Dorsolateral prefrontal cortex (tissue), 120 donors: ENCODE measurements at regions of chr2 and their contacts with region 1.

Region 1: GRCh38 chr2:158006961-158007719 is 94.5 kb upstream of the UPP2 start:
- DNase-seq: no peak
- H3K4me3 ChIP-seq: no peak overlapping the region
- H3K27ac ChIP-seq: no peak overlapping the region
- H3K27me3 ChIP-seq: no peaks in the 10 kb centered on the region
- CTCF ChIP-seq: no peak

Region 2: GRCh38 chr2:157302492-157303099 is 704.5 kb before region 1 on chr2:
- intact Hi-C with region 1: loop called in 1 of 2 experiments (anchors 5 kb)
- DNase-seq: peak in 1 of 10 donors; percentile 38
- H3K4me3 ChIP-seq: peak overlapping the region in 14 of 59 donors; percentile 8 to 52 (median 21)
- H3K27ac ChIP-seq: peak overlapping the region in 10 of 59 donors; percentile 14 to 80 (median 37)
- H3K27me3 ChIP-seq: peaks cover 0 to 8% (median 0%) of the 10 kb centered on the region in 45 donors
- CTCF ChIP-seq: peak; percentile 77 to 99 (median 90)

Region 3: DNA sequence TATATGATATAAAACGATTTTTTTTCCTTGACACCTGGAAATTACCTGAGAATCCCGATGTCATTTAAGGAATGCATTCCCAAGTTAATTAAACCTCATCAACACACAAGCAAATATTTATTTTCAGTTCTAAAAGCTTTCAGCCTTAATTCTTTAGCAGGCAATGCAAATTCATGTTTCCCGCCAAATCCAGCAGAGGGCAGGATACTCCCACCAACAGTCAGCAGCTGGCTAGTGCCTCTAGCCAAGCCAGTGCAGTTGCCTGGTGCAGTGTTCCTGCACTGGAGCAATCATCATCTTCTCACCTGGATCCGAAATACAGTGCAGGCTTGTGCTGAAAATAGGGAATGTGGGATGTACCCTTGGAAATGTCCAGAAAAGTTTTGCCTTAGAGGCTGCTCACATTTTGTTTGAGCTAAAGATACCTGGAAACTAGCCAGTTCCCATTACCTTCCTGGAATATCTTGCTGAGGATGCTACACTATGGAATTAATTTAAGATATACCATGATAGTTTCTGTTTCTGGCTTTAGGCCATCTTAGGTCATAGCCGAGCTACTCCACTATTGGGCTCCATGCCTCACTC is 514.9 kb before region 1 on chr2:
- intact Hi-C with region 1: loop called (anchors 5 to 10 kb)
- DNase-seq: peak; percentile 31 to 81 (median 68)
- H3K4me3 ChIP-seq: no peak overlapping the region
- H3K27ac ChIP-seq: no peak overlapping the region
- H3K27me3 ChIP-seq: no peaks in the 10 kb centered on the region
- CTCF ChIP-seq: peak; percentile 49 to 92 (median 80)

Region 4: GRCh38 chr2:157497638-157498314 is 509.4 kb before region 1 on chr2:
- intact Hi-C with region 1: loop called (anchors 5 to 10 kb)
- DNase-seq: no peak
- H3K4me3 ChIP-seq: no peak overlapping the region
- H3K27ac ChIP-seq: no peak overlapping the region
- H3K27me3 ChIP-seq: no peaks in the 10 kb centered on the region
- CTCF ChIP-seq: peak; percentile 57 to 84 (median 73)

Region 5: DNA sequence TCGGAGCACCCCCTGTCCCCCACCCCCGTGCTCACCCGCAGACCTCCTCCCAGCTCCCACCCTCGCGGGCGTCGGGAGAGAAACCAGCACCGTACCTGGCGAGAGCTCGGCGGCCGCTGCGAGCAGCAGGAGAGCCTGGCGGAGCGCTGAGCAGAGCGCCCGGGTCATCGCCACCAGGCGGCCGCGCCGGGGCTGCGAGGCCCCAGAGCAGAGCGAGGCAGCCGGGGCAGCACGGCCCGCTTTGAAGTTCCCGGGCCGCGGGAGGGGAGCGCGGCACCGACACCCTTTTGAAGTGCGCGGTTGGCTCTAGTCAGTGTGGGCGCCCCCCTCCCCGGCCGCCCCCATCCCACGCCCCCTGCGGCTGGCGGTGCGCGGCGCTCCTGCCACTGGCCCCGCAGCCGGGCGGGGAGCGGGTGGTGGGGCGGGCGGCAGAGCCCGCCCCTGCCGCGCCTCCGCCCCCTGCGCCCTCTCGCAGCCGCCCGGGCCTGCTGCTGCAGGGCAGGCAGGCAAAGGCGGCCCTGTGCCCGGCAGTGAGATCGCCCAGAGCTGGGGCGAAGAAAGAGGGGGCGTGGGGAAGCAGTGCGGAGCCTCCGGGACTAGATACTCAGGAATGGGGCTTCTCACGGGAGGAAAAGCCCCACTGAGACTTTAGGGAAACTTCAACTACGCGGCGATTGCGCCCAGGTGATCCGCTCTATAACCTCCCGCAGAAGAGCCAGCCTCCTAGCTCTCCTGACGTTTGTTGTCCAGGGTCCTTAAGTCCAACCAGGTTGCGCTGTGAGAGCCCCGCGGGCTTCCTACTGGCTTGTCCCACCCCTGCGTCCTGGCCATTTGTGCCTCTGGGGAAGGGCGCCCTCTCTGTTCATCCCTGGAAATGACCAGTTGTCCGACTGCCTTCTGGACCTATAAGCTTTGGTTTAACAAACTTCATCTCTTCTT is 378.4 kb before region 1 on chr2 and contains the start of gene ACVR1C:
- intact Hi-C with region 1: loop called in 1 of 2 experiments (anchors 10 kb)
- DNase-seq: peak; percentile 25 to 83 (median 75)
- H3K4me3 ChIP-seq: peak within 1 kb of the TSS; percentile 49 to 91 (median 75)
- H3K27ac ChIP-seq: peak within 1 kb of the TSS in 58 of 59 donors; percentile 54 to 98 (median 92)
- H3K27me3 ChIP-seq: no peaks in the 10 kb centered on the region
- CTCF ChIP-seq: peak in 55 of 56 donors; percentile 47 to 83 (median 68)
- total RNA-seq, gene ACVR1C: 5.3 to 20.6 (median 11.5) TPM

Region 6: GRCh38 chr2:157777427-157777826 is 229.7 kb before region 1 on chr2:
- intact Hi-C with region 1: loop called (anchors 1 to 5 kb)
- DNase-seq: peak in 3 of 10 donors; percentile 14 to 65 (median 56)
- H3K4me3 ChIP-seq: no peak overlapping the region
- H3K27ac ChIP-seq: no peak overlapping the region
- H3K27me3 ChIP-seq: no peaks in the 10 kb centered on the region
- CTCF ChIP-seq: peak; percentile 49 to 94 (median 74)